Activated CD4-positive, alpha-beta T cell treated with anti-CD3 and anti-CD28 coated beads, Interleukin-2, amount 10 ng/mL, durations not matched to agents 24 days and 14 days (primary cell): ENCODE measurements at regions of chr10 and their contacts with region 1.

Region 1: DNA sequence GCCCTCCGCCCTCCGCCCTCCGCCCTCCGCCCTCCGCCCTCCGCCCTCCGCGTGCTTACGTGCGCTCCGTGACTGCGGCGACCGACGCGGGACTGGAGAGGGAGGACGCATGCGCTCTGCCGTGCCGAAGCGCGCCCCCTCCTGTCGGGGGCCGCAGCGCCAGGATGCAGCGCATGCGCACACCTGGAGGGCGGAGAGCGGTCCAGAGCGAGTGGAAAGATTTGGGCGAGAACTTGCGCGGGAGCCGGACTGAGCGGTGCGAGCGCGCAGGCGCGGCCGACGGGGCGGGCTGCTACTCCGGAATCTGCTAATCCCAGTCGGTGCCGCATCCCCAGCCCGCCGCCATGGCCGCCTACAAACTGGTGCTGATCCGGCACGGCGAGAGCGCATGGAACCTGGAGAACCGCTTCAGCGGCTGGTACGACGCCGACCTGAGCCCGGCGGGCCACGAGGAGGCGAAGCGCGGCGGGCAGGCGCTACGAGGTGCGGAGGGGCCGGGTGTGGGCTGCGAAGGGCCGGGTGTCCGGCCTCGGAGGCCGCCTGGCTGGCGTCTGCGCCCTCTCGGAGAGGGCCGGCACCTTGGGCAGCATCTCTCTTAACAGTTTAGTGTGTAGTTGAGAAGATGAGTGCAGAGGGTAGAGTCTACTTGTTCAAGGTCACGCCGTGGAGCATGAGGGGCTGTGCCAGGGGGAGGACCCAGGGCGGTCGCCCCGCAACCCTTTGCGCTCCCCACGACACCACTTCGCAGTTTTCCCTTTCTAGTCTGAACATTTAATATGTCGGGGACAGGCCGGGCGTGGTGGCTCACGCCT is at the start of gene PGAM1:
- DNase-seq: peak; percentile 99
- H3K4me3 Mint-ChIP-seq: peak within 1 kb of the TSS; percentile 94
- H3K27ac Mint-ChIP-seq: peak within 1 kb of the TSS; percentile 97
- H3K4me1 Mint-ChIP-seq: peaks cover 46% of the 10 kb centered on the region
- H3K27me3 Mint-ChIP-seq: peaks cover 2% of the 10 kb centered on the region
- total RNA-seq, gene PGAM1: 1,086 and 1,108 TPM in 2 replicates

Region 2: GRCh38 chr10:97400665-97401454 is 25.3 kb before region 1 on chr10 and contains the start of gene RRP12:
- intact Hi-C with region 1: loop called (anchors 1 kb)
- DNase-seq: peak; percentile 97
- H3K4me3 Mint-ChIP-seq: peak within 1 kb of the TSS; percentile 97
- H3K27ac Mint-ChIP-seq: peak within 1 kb of the TSS; percentile 94
- H3K4me1 Mint-ChIP-seq: peaks cover 16% of the 10 kb centered on the region
- H3K27me3 Mint-ChIP-seq: no peaks in the 10 kb centered on the region
- total RNA-seq, gene RRP12: 99.4 and 106 TPM in 2 replicates

Region 3: GRCh38 chr10:97407211-97407951 is 18.8 kb before region 1 on chr10:
- intact Hi-C with region 1: loop called (anchors 1 kb)
- DNase-seq: peak; percentile 90
- H3K4me3 Mint-ChIP-seq: peak overlapping the region; percentile 73
- H3K27ac Mint-ChIP-seq: peak overlapping the region; percentile 63
- H3K4me1 Mint-ChIP-seq: peaks cover 13% of the 10 kb centered on the region
- H3K27me3 Mint-ChIP-seq: no peaks in the 10 kb centered on the region

Region 4: GRCh38 chr10:97412891-97413304 is 13.3 kb before region 1 on chr10:
- intact Hi-C with region 1: loop called (anchors 1 kb)
- DNase-seq: peak; percentile 83
- H3K4me3 Mint-ChIP-seq: peak overlapping the region; percentile 49
- H3K27ac Mint-ChIP-seq: peak overlapping the region; percentile 84
- H3K4me1 Mint-ChIP-seq: peaks cover 42% of the 10 kb centered on the region
- H3K27me3 Mint-ChIP-seq: no peaks in the 10 kb centered on the region

Region 5: DNA sequence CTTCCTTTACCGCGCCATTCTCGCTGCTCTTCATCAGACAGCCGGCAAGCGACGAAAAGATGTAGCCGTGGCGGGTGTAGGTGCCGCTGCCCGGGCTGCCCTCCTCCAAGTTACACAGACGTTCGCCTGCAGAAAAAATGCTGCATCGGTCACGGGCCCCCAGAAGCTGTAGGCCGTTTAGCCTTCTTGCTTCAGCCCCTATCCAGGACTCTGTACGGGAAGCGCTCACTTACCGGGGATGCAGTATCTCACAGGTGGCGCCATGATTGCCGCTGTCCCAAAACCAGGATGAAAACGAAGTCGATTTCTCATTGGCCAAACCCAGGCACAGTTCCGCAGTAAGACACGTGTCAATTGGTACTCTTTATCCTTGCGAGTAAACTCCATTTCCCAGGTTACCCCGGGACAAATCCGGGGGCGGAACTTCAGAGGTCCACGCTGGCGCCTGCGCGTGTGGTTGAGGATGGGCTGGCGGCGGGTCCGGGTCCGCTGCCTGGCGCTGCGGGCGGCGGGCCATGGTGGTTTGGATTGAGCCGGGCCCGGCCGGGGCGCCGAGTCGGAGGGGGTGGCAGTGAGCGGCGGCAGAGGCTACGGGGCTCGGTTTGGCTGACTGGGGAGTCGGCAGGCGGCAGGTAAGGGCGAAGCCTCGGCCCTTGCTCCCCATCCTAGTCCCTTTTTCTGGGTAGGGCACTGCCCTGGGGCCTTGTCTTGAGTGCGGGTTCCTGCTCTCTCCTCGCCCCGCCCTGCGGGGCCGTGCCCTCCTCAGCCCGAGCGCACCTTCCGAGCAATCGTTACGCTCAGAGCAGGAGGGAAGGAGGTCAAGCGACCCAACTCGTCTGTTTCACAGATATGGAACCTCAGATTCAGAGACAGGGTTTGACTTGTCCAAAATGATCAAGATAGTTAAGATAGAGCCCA is 19.8 kb after region 1 on chr10 and contains the starts of genes EXOSC1 and ZDHHC16:
- intact Hi-C with region 1: loop called (anchors 1 kb)
- DNase-seq: peak; percentile 98
- H3K4me3 Mint-ChIP-seq: peak within 1 kb of the TSS; percentile 95
- H3K27ac Mint-ChIP-seq: peak within 1 kb of the TSS; percentile 70
- H3K4me1 Mint-ChIP-seq: peaks cover 47% of the 10 kb centered on the region
- H3K27me3 Mint-ChIP-seq: no peaks in the 10 kb centered on the region
- total RNA-seq, gene EXOSC1: 57.9 and 59.8 TPM in 2 replicates
- total RNA-seq, gene ZDHHC16: 42.9 and 43.1 TPM in 2 replicates

Region 6: DNA sequence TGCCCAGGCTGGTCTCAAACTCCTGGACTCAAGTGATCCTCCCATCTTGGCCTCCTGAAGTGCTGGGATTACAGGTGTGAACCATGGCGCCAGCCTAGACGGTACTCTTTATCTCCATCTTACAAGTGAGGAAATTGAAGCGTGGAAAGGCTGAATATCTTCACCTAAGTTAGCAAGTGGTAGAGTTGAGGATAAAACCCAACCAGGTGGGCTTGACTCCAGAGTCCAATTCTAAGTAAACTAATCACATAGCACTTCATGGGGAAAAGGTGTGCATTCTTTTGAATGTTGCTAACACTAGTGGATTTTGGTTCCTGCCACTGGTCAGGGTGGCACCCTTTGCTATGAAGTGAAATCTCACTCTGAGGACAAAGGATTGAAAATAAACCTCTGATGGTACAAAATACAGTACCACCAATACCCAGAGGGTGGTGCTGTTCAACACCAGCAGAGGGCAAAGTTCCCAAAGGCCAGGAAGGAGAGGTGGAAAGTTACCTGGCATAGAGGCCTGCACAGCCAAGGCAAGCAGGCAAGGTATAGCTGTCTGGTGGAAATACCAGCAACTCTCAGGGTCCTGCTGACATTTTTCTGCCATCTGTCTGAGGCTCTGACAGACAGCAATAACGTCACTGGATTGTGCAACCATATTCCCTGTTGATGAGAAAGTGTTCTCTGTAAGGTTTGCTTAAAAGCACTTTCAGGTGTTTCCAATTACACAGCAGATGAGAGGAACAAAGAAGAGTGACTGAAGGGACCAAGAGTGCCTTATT is 37.4 kb after region 1 on chr10:
- intact Hi-C with region 1: no loop called
- DNase-seq: peak; percentile 83
- H3K4me3 Mint-ChIP-seq: no peak overlapping the region
- H3K27ac Mint-ChIP-seq: peak overlapping the region; percentile 43
- H3K4me1 Mint-ChIP-seq: peaks cover 1% of the 10 kb centered on the region
- H3K27me3 Mint-ChIP-seq: no peaks in the 10 kb centered on the region

Region 7: GRCh38 chr10:97640174-97640867 is 214.2 kb after region 1 on chr10 and contains the start of gene PI4K2A:
- intact Hi-C with region 1: loop called (anchors 5 kb)
- DNase-seq: peak; percentile 100
- H3K4me3 Mint-ChIP-seq: peak within 1 kb of the TSS; percentile 95
- H3K27ac Mint-ChIP-seq: peak within 1 kb of the TSS; percentile 90
- H3K4me1 Mint-ChIP-seq: peaks cover 23% of the 10 kb centered on the region
- H3K27me3 Mint-ChIP-seq: peaks cover 3% of the 10 kb centered on the region
- total RNA-seq, gene PI4K2A: 17.8 TPM in 2 replicates

Region 8: GRCh38 chr10:97736902-97737769 is 311.0 kb after region 1 on chr10 and contains the start of gene ZFYVE27:
- intact Hi-C with region 1: loop called (anchors 10 kb)
- DNase-seq: peak; percentile 99
- H3K4me3 Mint-ChIP-seq: peak within 1 kb of the TSS; percentile 96
- H3K27ac Mint-ChIP-seq: peak within 1 kb of the TSS; percentile 94
- H3K4me1 Mint-ChIP-seq: peaks cover 38% of the 10 kb centered on the region
- H3K27me3 Mint-ChIP-seq: peaks cover 5% of the 10 kb centered on the region
- total RNA-seq, gene ZFYVE27: 38.1 and 42.2 TPM in 2 replicates